Naive thymus-derived CD4-positive, alpha-beta T cell (primary cell): ENCODE measurements at regions of chr10 and their contacts with region 1.

Region 1: DNA sequence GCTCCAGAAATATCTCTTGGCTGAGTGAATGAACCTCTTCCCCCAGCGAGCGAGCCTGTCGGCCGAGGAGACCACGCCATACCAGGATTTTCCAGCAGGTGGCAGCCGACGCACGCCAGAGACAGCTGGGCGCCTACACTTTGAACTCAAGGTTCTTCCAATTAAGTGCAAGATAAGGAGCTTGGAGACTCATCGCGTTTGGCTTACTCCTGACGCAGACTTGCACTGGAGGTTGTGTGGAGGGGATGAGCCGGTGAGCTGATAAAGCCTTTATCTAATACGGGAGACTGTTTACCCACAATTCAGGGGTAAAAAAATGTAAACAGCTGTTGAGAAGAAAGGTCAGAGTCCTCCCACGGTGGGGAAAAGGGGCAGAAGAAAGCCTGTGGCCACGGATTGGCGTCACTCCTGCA is 45.9 kb upstream of the EMX2 start:
- DNase-seq: peak; percentile 37 to 73 (median 55)
- ATAC-seq: peak; percentile 76
- H3K4me3 ChIP-seq: no peak overlapping the region
- H3K4me3 Mint-ChIP-seq: no peak overlapping the region
- H3K27ac ChIP-seq: no peak overlapping the region
- H3K27ac Mint-ChIP-seq: no peak overlapping the region
- H3K4me1 ChIP-seq: no peaks in the 10 kb centered on the region
- H3K4me1 Mint-ChIP-seq: peaks cover 0 to 4% (median 3%) of the 10 kb centered on the region in 7 donors
- H3K27me3 ChIP-seq: no peaks in the 10 kb centered on the region
- H3K27me3 Mint-ChIP-seq: peaks cover 19 to 46% (median 34%) of the 10 kb centered on the region in 5 donors

Region 2: DNA sequence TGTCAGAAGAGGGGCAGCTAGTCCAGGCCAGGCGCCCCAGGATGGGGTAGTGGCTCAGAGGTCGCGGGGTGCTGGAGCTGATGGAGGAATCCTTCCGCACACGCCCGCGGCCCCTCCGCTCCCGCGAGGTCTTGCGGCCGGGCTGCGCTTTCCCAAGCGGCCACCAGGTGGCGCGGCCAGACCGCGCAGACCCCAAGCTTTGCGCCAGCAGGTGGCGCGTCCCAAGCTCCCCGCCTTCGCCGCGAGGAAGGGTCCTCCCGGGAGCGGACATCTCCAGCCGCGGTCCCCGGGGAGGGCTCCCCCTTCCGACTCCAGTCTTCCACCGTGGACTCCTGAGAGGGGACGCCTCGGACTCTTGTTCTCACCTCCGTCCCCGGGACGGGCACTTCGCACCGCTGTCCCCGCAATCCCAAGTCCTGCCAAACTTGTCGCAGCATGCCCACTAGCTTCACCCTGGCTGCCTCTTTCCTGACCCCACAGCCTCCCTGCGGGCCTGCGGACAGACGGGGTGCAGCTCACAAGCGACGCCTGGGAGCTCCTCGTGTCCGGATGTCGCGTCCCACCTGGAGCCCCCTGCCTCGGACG is 279.9 kb before region 1 on chr10:
- CTCF ChIA-PET with region 1: no interaction called
- POLR2A ChIA-PET with region 1: no interaction called
- intact Hi-C with region 1: loop called in 1 of 2 experiments (anchors 10 kb)
- DNase-seq: peak; percentile 27 to 81 (median 64)
- ATAC-seq: peak; percentile 92
- H3K4me3 ChIP-seq: peak overlapping the region; percentile 62
- H3K4me3 Mint-ChIP-seq: peak overlapping the region; percentile 71 to 86 (median 80)
- H3K27ac ChIP-seq: no peak overlapping the region
- H3K27ac Mint-ChIP-seq: no peak overlapping the region
- H3K4me1 ChIP-seq: peaks cover 6 to 10% of the 10 kb centered on the region in 2 donors
- H3K4me1 Mint-ChIP-seq: peaks cover 0 to 9% (median 7%) of the 10 kb centered on the region in 7 donors
- H3K27me3 ChIP-seq: peaks cover 3 to 6% of the 10 kb centered on the region in 2 donors
- H3K27me3 Mint-ChIP-seq: peaks cover 21 to 45% (median 37%) of the 10 kb centered on the region in 5 donors

Region 3: GRCh38 chr10:117477961-117478670 is 18.5 kb before region 1 on chr10:
- CTCF ChIA-PET with region 1: no interaction called
- POLR2A ChIA-PET with region 1: no interaction called
- intact Hi-C with region 1: no loop called
- DNase-seq: no peak
- ATAC-seq: no peak
- H3K4me3 ChIP-seq: no peak overlapping the region
- H3K4me3 Mint-ChIP-seq: no peak overlapping the region
- H3K27ac ChIP-seq: no peak overlapping the region
- H3K27ac Mint-ChIP-seq: no peak overlapping the region
- H3K4me1 ChIP-seq: no peaks in the 10 kb centered on the region
- H3K4me1 Mint-ChIP-seq: peaks cover 0 to 5% (median 0%) of the 10 kb centered on the region in 7 donors
- H3K27me3 ChIP-seq: no peaks in the 10 kb centered on the region
- H3K27me3 Mint-ChIP-seq: peaks cover 0 to 40% (median 37%) of the 10 kb centered on the region in 5 donors

Region 4: DNA sequence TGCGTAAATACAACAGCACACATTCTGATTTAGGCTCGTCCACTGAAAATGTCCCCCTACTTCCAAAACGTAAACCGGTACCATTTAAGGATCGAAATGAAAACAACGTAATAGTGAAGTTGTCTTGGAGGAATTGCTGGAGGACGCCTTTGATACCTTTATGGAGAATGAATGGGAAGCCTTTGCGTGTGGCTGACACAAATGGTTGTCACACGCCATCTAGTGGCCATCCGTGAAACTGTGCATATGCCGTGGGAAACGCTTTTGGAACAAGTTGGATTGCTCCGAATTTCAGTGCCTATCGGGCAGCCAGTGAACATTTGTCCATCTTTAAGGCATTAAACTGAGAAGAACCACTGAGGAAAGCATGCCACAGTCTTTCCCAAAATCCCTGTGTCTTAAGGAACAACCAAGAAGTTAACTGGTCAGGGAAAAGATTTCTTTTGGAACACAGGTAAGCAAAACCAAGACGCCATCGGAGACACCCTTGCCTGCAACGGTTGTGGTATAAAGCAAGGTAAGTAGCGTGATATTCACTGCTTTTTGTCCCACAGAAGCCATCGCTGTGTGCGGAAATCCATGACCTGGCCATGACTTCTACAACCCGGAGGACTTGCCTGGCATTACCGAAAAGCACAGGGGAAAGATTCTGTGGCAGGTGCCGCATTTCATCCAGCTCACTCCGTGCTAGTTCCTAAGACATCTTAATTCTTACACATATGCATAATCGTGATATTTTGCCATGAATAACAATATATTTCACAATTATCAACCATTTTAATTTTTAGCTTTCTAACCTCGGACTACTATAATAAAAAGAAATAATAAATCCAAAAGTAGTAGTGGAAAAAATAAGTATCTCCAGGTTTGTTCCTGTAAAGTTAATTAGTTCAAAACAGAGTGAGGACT is 744.9 kb after region 1 on chr10:
- CTCF ChIA-PET with region 1: interaction called, 61 read pairs
- POLR2A ChIA-PET with region 1: no interaction called
- intact Hi-C with region 1: loop called (anchors 1 kb)
- DNase-seq: peak; percentile 16 to 63 (median 43)
- ATAC-seq: peak; percentile 45
- H3K4me3 ChIP-seq: no peak overlapping the region
- H3K4me3 Mint-ChIP-seq: no peak overlapping the region
- H3K27ac ChIP-seq: no peak overlapping the region
- H3K27ac Mint-ChIP-seq: no peak overlapping the region
- H3K4me1 ChIP-seq: no peaks in the 10 kb centered on the region
- H3K4me1 Mint-ChIP-seq: peaks cover 0 to 6% (median 0%) of the 10 kb centered on the region in 7 donors
- H3K27me3 ChIP-seq: no peaks in the 10 kb centered on the region
- H3K27me3 Mint-ChIP-seq: peaks cover 38 to 67% (median 52%) of the 10 kb centered on the region in 5 donors

Region 5: GRCh38 chr10:118259288-118259906 is 762.8 kb after region 1 on chr10:
- CTCF ChIA-PET with region 1: interaction called, 3 read pairs
- POLR2A ChIA-PET with region 1: no interaction called
- intact Hi-C with region 1: loop called in 1 of 2 experiments (anchors 5 kb)
- DNase-seq: peak in 3 of 9 donors; percentile 1 to 23 (median 2)
- ATAC-seq: peak; percentile 31
- H3K4me3 ChIP-seq: no peak overlapping the region
- H3K4me3 Mint-ChIP-seq: no peak overlapping the region
- H3K27ac ChIP-seq: no peak overlapping the region
- H3K27ac Mint-ChIP-seq: no peak overlapping the region
- H3K4me1 ChIP-seq: no peaks in the 10 kb centered on the region
- H3K4me1 Mint-ChIP-seq: peaks cover 0 to 1% (median 0%) of the 10 kb centered on the region in 7 donors
- H3K27me3 ChIP-seq: peaks cover 0 to 3% of the 10 kb centered on the region in 2 donors
- H3K27me3 Mint-ChIP-seq: peaks cover 63 to 77% (median 68%) of the 10 kb centered on the region in 5 donors

Region 6: DNA sequence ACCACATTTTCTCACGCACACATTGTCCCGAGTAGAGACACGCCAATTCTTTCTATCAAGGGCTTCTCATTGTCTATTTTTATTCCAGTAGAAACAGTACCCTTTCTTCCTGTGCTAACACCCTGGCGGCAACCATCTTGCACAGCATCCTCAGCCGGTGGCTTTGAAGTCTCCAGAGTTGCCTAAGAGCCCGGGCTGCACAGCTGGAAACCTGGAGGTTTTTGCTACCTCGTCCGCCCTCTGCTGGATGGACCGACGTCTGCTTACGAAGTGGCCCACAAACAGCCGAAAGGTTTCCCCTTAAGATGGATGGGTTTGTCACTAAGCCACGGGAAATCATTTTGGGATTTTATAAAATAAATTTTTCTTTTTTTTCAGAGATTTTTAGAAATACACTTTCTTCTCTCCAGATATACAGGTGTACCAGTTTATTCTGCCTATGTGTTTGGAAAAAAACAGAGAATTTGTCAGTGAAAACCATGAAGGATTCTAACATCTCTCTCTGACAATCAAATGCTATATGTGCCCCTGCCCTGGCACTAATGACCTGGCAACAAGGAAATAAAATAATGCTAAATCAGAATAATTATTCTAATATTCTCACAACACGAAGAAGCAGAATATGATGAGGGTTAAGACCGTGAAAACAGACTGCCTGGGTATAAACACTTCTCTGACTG is 927.3 kb after region 1 on chr10:
- CTCF ChIA-PET with region 1: interaction called, 3 read pairs
- POLR2A ChIA-PET with region 1: no interaction called
- intact Hi-C with region 1: loop called in 1 of 2 experiments (anchors 1 kb)
- DNase-seq: peak; percentile 14 to 57 (median 46)
- ATAC-seq: peak; percentile 80
- H3K4me3 ChIP-seq: no peak overlapping the region
- H3K4me3 Mint-ChIP-seq: no peak overlapping the region
- H3K27ac ChIP-seq: no peak overlapping the region
- H3K27ac Mint-ChIP-seq: no peak overlapping the region
- H3K4me1 ChIP-seq: no peaks in the 10 kb centered on the region
- H3K4me1 Mint-ChIP-seq: no peaks in the 10 kb centered on the region
- H3K27me3 ChIP-seq: no peaks in the 10 kb centered on the region
- H3K27me3 Mint-ChIP-seq: peaks cover 14 to 41% (median 24%) of the 10 kb centered on the region in 5 donors

Region 7: DNA sequence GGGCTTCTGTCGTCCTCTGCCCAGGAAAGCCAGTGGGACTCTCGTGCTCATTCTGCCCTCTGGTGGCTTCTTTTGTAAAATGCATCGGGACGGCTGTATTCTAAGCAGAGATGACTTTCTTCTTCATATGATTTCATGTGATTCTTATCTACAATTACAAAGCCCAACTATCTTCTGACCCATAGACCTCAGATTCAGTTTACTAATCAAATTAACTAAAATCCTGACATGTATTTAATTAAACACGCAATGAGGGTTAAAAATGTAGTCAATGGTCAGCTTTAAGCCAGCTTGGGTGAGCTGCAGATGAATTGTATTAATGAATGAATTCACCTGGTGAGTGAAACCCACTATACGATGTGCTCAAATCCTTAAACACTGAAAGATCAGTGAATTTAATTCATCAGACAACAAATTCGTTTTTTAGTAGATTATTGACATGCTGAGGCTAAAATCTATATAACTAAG is 963.1 kb after region 1 on chr10:
- CTCF ChIA-PET with region 1: interaction called, 19 read pairs
- POLR2A ChIA-PET with region 1: no interaction called
- intact Hi-C with region 1: loop called (anchors 1 kb)
- DNase-seq: peak in 7 of 9 donors; percentile 14 to 46 (median 37)
- ATAC-seq: peak; percentile 65
- H3K4me3 ChIP-seq: peak overlapping the region; percentile 45
- H3K4me3 Mint-ChIP-seq: peak overlapping the region; percentile 46 to 78 (median 62)
- H3K27ac ChIP-seq: no peak overlapping the region
- H3K27ac Mint-ChIP-seq: no peak overlapping the region
- H3K4me1 ChIP-seq: no peaks in the 10 kb centered on the region
- H3K4me1 Mint-ChIP-seq: peaks cover 0 to 9% (median 8%) of the 10 kb centered on the region in 7 donors
- H3K27me3 ChIP-seq: no peaks in the 10 kb centered on the region
- H3K27me3 Mint-ChIP-seq: peaks cover 37 to 65% (median 42%) of the 10 kb centered on the region in 5 donors

Region 8: GRCh38 chr10:118543714-118544400 is 1047.2 kb after region 1 on chr10:
- CTCF ChIA-PET with region 1: no interaction called
- POLR2A ChIA-PET with region 1: no interaction called
- intact Hi-C with region 1: loop called in 1 of 2 experiments (anchors 1 kb)
- DNase-seq: peak in 8 of 9 donors; percentile 13 to 43 (median 26)
- ATAC-seq: peak; percentile 67
- H3K4me3 ChIP-seq: no peak overlapping the region
- H3K4me3 Mint-ChIP-seq: peak overlapping the region in 1 of 10 donors; percentile 23
- H3K27ac ChIP-seq: no peak overlapping the region
- H3K27ac Mint-ChIP-seq: no peak overlapping the region
- H3K4me1 ChIP-seq: no peaks in the 10 kb centered on the region
- H3K4me1 Mint-ChIP-seq: peaks cover 0 to 3% (median 0%) of the 10 kb centered on the region in 7 donors
- H3K27me3 ChIP-seq: peaks cover 0 to 5% of the 10 kb centered on the region in 2 donors
- H3K27me3 Mint-ChIP-seq: peaks cover 28 to 59% (median 56%) of the 10 kb centered on the region in 5 donors